B cell (primary cell): ENCODE measurements at regions of chr10 and their contacts with region 1.

Region 1: DNA sequence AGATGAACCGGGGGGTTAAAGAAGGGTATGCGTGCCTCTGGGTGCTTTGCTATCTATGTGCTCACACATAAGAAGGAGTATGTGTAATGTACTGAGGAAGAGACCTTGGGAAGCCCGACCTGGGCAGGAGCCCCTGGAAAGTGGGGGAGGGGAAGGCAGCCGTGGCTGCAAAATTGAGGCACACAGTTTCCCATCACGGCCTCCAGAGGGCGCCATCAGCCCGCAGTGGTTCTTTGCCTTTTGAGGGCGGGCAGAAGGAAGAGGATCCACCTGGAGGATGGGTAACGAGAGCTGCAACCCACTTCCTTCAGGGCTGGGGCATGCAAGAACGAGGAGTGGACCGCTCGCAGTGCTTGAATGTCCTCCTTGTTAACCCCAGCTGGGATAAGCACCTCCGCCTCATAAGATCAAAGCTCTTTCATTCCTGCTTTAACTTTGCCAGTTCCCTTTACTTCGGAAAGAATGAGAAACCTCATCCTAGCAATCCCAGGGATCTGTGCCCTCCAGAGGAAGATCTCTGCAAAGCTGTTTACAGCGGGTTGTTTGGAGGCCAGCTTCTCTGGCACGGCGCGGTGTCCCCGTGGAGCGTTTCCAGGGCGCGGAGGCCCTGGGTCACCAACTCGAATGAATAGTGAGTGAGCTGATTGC is 77.9 kb downstream of the PCGF5 start:
- DNase-seq: peak; percentile 85
- ATAC-seq: peak; percentile 94
- H3K4me3 ChIP-seq: peak overlapping the region in 4 of 5 experiments; percentile 14 to 54 (median 48)
- H3K4me3 Mint-ChIP-seq: peak overlapping the region; percentile 75
- H3K27ac ChIP-seq: no peak overlapping the region
- H3K27ac Mint-ChIP-seq: no peak overlapping the region
- H3K4me1 ChIP-seq: peaks cover 11% of the 10 kb centered on the region in 2 donors
- H3K4me1 Mint-ChIP-seq: peaks cover 9% of the 10 kb centered on the region
- H3K27me3 ChIP-seq: no peaks in the 10 kb centered on the region
- H3K27me3 Mint-ChIP-seq: peaks cover 21% of the 10 kb centered on the region
- CTCF ChIP-seq: peak; percentile 93

Region 2: GRCh38 chr10:91287276-91287675 is 11.1 kb before region 1 on chr10:
- CTCF ChIA-PET with region 1: interaction called, 19 read pairs
- POLR2A ChIA-PET with region 1: no interaction called
- intact Hi-C with region 1: no loop called
- DNase-seq: no peak
- ATAC-seq: no peak
- H3K4me3 ChIP-seq: no peak overlapping the region
- H3K4me3 Mint-ChIP-seq: no peak overlapping the region
- H3K27ac ChIP-seq: no peak overlapping the region
- H3K27ac Mint-ChIP-seq: no peak overlapping the region
- H3K4me1 ChIP-seq: no peaks in the 10 kb centered on the region
- H3K4me1 Mint-ChIP-seq: no peaks in the 10 kb centered on the region
- H3K27me3 ChIP-seq: no peaks in the 10 kb centered on the region
- H3K27me3 Mint-ChIP-seq: no peaks in the 10 kb centered on the region
- CTCF ChIP-seq: no peak

Region 3: DNA sequence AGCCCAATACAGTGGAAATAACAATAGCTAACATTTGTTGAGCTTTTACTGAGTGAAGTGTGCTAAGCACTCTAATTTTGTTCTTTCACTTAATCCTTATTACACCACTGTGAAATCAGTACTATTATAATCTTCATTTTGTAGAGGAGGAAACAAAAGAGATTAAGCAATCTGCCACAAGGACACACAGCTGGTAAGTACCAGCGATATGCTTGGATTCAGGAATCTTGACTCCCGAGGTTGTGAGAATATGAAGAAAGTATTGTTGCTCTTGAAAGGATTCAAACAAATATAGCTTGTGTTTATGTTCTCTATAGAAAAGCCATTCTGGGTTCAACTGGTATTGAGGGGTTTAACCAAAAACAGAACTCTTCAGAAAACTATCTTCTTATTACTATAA is 18.1 kb after region 1 on chr10:
- CTCF ChIA-PET with region 1: interaction called, 10 read pairs
- POLR2A ChIA-PET with region 1: no interaction called
- intact Hi-C with region 1: no loop called
- DNase-seq: no peak
- ATAC-seq: no peak
- H3K4me3 ChIP-seq: no peak overlapping the region
- H3K4me3 Mint-ChIP-seq: no peak overlapping the region
- H3K27ac ChIP-seq: no peak overlapping the region
- H3K27ac Mint-ChIP-seq: no peak overlapping the region
- H3K4me1 ChIP-seq: no peaks in the 10 kb centered on the region
- H3K4me1 Mint-ChIP-seq: no peaks in the 10 kb centered on the region
- H3K27me3 ChIP-seq: no peaks in the 10 kb centered on the region
- H3K27me3 Mint-ChIP-seq: peaks cover 11% of the 10 kb centered on the region
- CTCF ChIP-seq: no peak

Region 4: GRCh38 chr10:91381257-91381891 is 83.0 kb after region 1 on chr10:
- CTCF ChIA-PET with region 1: no interaction called
- POLR2A ChIA-PET with region 1: no interaction called
- intact Hi-C with region 1: no loop called
- DNase-seq: no peak
- ATAC-seq: no peak
- H3K4me3 ChIP-seq: no peak overlapping the region
- H3K4me3 Mint-ChIP-seq: no peak overlapping the region
- H3K27ac ChIP-seq: no peak overlapping the region
- H3K27ac Mint-ChIP-seq: no peak overlapping the region
- H3K4me1 ChIP-seq: no peaks in the 10 kb centered on the region
- H3K4me1 Mint-ChIP-seq: no peaks in the 10 kb centered on the region
- H3K27me3 ChIP-seq: peaks cover 0 to 14% (median 2%) of the 10 kb centered on the region in 4 experiments
- H3K27me3 Mint-ChIP-seq: peaks cover 39% of the 10 kb centered on the region
- CTCF ChIP-seq: no peak